ENCODE measurements at regions of chr14 and their contacts with region 1.

Region 1: GRCh38 chr14:90758028-90758889 is 58.0 kb downstream of the TTC7B start:
- DNase-seq: peak; percentile 99
- H3K4me3 Mint-ChIP-seq: peak overlapping the region; percentile 81
- H3K27ac Mint-ChIP-seq: peak overlapping the region; percentile 82
- H3K4me1 Mint-ChIP-seq: peaks cover 14% of the 10 kb centered on the region
- H3K27me3 Mint-ChIP-seq: peaks cover 33% of the 10 kb centered on the region

Region 2: GRCh38 chr14:88947646-88948598 is 1810.3 kb before region 1 on chr14:
- intact Hi-C with region 1: no loop called
- DNase-seq: no peak
- H3K4me3 Mint-ChIP-seq: no peak overlapping the region
- H3K27ac Mint-ChIP-seq: no peak overlapping the region
- H3K4me1 Mint-ChIP-seq: no peaks in the 10 kb centered on the region
- H3K27me3 Mint-ChIP-seq: no peaks in the 10 kb centered on the region

Region 3: GRCh38 chr14:90739318-90740068 is 18.8 kb before region 1 on chr14:
- intact Hi-C with region 1: no loop called
- DNase-seq: no peak
- H3K4me3 Mint-ChIP-seq: no peak overlapping the region
- H3K27ac Mint-ChIP-seq: no peak overlapping the region
- H3K4me1 Mint-ChIP-seq: no peaks in the 10 kb centered on the region
- H3K27me3 Mint-ChIP-seq: no peaks in the 10 kb centered on the region

Region 4: DNA sequence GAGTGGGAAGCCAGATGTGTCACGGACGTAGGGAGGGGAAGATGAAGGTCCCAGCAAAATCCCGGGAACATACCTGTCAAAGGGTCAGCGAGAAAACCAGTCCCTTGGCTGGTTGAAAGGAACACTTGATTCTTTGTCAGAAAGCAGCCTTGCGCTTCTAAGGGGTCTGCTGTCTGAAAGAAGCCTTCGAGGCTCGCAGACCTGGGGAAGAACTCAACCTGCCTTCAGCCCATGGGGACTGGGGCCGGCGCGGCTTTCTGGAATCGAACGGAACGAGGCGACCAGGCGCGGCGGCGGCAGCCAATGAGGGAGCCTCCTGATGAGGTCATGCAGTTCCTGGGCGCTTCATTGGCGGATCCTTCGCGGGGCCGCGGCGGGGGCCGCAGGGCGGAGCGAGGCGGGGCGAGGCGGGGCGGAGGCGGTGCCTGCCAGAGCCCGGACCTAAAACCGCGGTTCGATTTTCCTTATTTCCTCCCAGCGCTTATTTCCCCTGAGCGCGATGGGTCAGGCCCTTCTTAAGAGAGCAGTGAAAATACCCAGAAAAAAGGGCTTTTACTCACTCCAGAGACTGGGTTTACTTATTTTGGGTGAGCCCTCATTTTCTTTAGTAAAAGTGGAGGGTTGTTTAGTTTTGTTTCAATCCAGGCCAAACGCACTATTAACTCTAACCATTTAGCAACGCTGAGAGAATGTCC is 69.8 kb after region 1 on chr14:
- intact Hi-C with region 1: loop called (anchors 2 kb)
- DNase-seq: peak; percentile 98
- H3K4me3 Mint-ChIP-seq: peak overlapping the region; percentile 80
- H3K27ac Mint-ChIP-seq: peak overlapping the region; percentile 93
- H3K4me1 Mint-ChIP-seq: peaks cover 22% of the 10 kb centered on the region
- H3K27me3 Mint-ChIP-seq: no peaks in the 10 kb centered on the region

Measured in activated CD4-positive, alpha-beta T cell treated with anti-CD3 and anti-CD28 coated beads, Interleukin-2, amount 10 ng/mL, durations not matched to agents 24 days and 14 days (primary cell).